ENCODE measurements at regions of chr15 and their contacts with region 1.

Region 1: DNA sequence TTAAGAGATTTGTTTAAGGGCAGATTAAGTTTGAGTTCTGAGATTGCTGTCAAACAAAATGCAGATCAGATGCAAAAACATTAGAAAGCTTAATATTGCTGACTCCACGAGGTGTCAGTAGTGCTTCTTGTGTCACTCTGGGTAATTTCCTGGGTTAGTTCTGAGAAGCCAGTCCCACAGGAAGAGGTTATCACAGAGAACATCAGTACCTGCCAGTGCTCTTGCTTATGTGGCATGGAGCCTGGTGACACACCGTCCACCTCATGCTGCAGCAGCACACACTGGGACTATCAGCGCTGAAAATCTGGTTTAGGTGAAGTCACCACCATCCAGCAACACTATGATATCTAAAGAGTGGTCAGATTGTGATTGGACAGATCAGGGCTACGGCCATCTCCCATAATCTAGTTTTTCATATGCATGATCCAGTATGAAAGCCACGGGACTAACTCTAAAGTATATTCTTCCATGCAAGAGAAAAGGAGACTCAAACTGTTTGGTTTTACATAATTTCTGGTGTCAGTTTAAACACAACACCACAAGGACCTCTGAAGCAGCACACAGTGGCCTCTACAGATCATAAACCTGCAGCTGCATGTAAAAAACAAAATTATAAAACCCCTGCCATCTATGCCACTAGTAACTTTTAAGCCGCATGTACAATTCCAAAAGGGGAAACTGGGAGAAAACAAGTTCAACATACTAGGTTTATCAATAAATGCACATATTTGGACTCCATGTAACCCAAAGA is 36.1 kb upstream of the MYO5C start:
- DNase-seq: peak; percentile 67 to 82 (median 81)
- H3K4me3 ChIP-seq: peak overlapping the region in 2 of 7 experiments; percentile 5 to 39
- H3K27ac ChIP-seq: no peak overlapping the region
- H3K4me1 ChIP-seq: peaks cover 0 to 10% (median 7%) of the 10 kb centered on the region in 4 experiments
- H3K27me3 ChIP-seq: no peaks in the 10 kb centered on the region

Region 2: GRCh38 chr15:52466134-52466701 is 134.6 kb after region 1 on chr15:
- CTCF ChIA-PET with region 1: interaction called, 19 read pairs
- POLR2A ChIA-PET with region 1: no interaction called
- DNase-seq: peak; percentile 29 to 61 (median 51)
- H3K4me3 ChIP-seq: no peak overlapping the region
- H3K27ac ChIP-seq: no peak overlapping the region
- H3K4me1 ChIP-seq: peaks cover 0 to 19% (median 7%) of the 10 kb centered on the region in 4 experiments
- H3K27me3 ChIP-seq: no peaks in the 10 kb centered on the region